ENCODE measurements at regions of chr10 and their contacts with region 1.

Region 1: GRCh38 chr10:115593060-115593459 is 499.9 kb downstream of the ATRNL1 start:
- DNase-seq: no peak
- H3K4me3 ChIP-seq: no peak overlapping the region
- H3K27ac ChIP-seq: no peak overlapping the region
- H3K4me1 ChIP-seq: no peaks in the 10 kb centered on the region
- H3K27me3 ChIP-seq: no peaks in the 10 kb centered on the region
- CTCF ChIP-seq: no peak

Region 2: DNA sequence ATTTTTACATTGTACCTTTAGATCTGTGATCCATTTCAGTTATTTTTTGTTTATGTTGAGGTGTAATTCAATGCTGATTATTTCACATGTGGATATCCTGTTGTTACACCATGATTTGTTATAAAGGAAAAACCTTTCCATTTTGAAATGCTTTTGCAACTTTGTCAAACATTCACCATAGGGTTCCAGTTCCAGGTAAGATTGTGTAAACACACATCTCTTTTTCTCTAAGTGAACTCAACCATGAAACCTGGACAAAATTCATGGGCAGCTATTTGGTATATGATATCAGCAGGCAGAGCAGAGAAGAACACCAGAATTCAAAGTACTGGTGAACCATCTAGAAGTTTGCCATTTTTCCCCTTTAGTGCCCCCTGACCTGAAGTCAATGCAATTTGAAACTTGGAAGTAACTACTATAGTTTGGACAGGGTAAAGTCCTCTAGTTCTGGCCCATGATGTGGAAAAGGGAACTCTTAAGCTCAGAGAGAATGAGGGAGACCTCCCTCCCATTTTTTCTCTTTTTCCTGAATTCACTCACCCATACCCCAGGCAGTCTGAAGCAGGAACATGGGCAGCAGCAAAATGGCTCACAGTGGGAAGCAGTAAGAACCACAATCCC is 53.8 kb before region 1 on chr10:
- CTCF ChIA-PET with region 1: interaction called, 3 read pairs
- POLR2A ChIA-PET with region 1: no interaction called
- intact Hi-C with region 1: loop called (anchors 2 kb)
- DNase-seq: no peak
- H3K4me3 ChIP-seq: no peak overlapping the region
- H3K27ac ChIP-seq: no peak overlapping the region
- H3K4me1 ChIP-seq: no peaks in the 10 kb centered on the region
- H3K27me3 ChIP-seq: no peaks in the 10 kb centered on the region
- CTCF ChIP-seq: no peak

Region 3: DNA sequence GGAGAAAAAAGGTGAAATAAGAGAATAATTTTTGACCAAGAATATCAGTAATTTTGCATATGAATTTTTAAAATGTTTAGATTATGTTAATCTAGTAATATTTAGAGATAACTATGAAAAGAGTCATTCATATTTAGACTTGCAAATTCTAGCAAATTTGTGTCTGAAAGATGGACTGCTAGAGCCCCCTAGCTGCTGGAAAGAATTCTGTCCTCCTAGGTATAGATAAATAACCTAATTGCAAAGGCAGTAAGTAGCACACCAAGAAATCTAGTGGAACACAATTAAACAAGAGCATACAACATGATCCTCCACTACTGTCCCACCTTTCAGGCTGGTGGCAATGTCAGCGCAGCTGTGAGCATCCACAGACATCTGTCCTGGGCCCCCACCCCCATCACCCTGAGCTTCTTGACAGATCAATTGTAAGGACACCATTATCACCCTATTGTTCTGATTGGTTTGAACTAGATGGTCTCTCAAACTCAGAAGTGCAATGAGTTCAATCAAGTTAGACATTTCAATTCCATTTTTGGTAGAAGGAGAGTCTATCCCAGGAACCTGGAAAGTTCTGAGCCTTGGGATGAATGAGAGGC is 694.9 kb after region 1 on chr10:
- CTCF ChIA-PET with region 1: no interaction called
- POLR2A ChIA-PET with region 1: no interaction called
- intact Hi-C with region 1: no loop called
- DNase-seq: peak; percentile 63
- H3K4me3 ChIP-seq: no peak overlapping the region
- H3K27ac ChIP-seq: no peak overlapping the region
- H3K4me1 ChIP-seq: no peaks in the 10 kb centered on the region
- H3K27me3 ChIP-seq: peaks cover 58% of the 10 kb centered on the region
- CTCF ChIP-seq: peak; percentile 75

Region 4: GRCh38 chr10:116555880-116556279 is 962.8 kb after region 1 on chr10:
- CTCF ChIA-PET with region 1: no interaction called
- POLR2A ChIA-PET with region 1: interaction called, 14 read pairs
- intact Hi-C with region 1: no loop called
- DNase-seq: no peak
- H3K4me3 ChIP-seq: no peak overlapping the region
- H3K27ac ChIP-seq: no peak overlapping the region
- H3K4me1 ChIP-seq: no peaks in the 10 kb centered on the region
- H3K27me3 ChIP-seq: peaks cover 5% of the 10 kb centered on the region
- CTCF ChIP-seq: no peak

Measured in A673 (cell line).